ENCODE measurements at regions of chr10 and their contacts with region 1.

Region 1: DNA sequence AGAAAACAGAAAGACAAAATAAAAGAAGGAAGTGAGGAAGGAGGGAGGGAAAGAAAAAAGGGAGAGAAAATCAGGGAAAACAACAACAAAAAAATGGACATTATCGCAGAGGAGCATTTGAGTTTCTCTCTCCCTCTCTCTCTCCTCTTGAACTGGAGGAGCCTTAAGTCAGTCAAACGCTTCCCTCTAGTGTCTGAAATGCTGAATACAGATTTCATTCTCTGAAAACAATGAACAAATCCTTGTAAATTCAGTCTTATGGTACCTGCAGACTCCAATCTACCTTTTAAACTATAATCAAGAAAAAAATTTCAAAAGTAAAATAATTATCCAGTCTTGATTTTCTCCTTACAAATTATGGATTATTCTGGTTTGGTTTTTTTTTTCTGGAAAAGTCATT is 89.2 kb upstream of the PFKP start:
- DNase-seq: no peak
- ATAC-seq: no peak
- H3K4me3 Mint-ChIP-seq: no peak overlapping the region
- H3K27ac Mint-ChIP-seq: peak overlapping the region; percentile 9
- H3K4me1 Mint-ChIP-seq: peaks cover 37% of the 10 kb centered on the region
- H3K27me3 Mint-ChIP-seq: no peaks in the 10 kb centered on the region
- CTCF ChIP-seq: no peak

Region 2: GRCh38 chr10:1109795-1110673 is 1868.1 kb before region 1 on chr10:
- CTCF ChIA-PET with region 1: no interaction called
- POLR2A ChIA-PET with region 1: no interaction called
- intact Hi-C with region 1: loop called (anchors 2 kb)
- DNase-seq: no peak
- ATAC-seq: peak; percentile 97
- H3K4me3 Mint-ChIP-seq: no peak overlapping the region
- H3K27ac Mint-ChIP-seq: peak overlapping the region; percentile 77
- H3K4me1 Mint-ChIP-seq: peaks cover 10% of the 10 kb centered on the region
- H3K27me3 Mint-ChIP-seq: no peaks in the 10 kb centered on the region
- CTCF ChIP-seq: no peak

Region 3: DNA sequence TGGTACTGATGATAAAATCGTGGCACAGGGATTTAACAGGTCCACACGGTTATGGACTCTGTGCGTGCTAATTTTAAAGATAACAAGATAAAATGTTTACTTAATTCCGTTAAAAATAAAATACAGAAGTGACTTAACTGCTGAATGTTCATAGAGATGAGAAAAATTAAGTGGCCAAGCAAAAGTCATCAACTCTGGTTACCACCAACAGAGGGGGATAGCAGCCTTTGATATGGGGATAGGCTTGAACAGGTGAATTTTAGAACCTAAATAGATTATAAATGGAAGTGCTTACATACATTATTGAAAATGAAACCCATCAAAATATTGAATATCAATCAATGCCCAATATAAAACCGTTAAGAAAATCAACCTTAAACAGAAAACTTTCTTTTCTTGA is 1677.0 kb before region 1 on chr10:
- CTCF ChIA-PET with region 1: no interaction called
- POLR2A ChIA-PET with region 1: no interaction called
- intact Hi-C with region 1: loop called (anchors 10 kb)
- DNase-seq: no peak
- ATAC-seq: no peak
- H3K4me3 Mint-ChIP-seq: no peak overlapping the region
- H3K27ac Mint-ChIP-seq: no peak overlapping the region
- H3K4me1 Mint-ChIP-seq: no peaks in the 10 kb centered on the region
- H3K27me3 Mint-ChIP-seq: peaks cover 12% of the 10 kb centered on the region
- CTCF ChIP-seq: no peak

Region 4: GRCh38 chr10:2839081-2839725 is 138.9 kb before region 1 on chr10:
- CTCF ChIA-PET with region 1: interaction called, 3 read pairs
- POLR2A ChIA-PET with region 1: no interaction called
- intact Hi-C with region 1: loop called (anchors 1 kb)
- DNase-seq: no peak
- ATAC-seq: no peak
- H3K4me3 Mint-ChIP-seq: no peak overlapping the region
- H3K27ac Mint-ChIP-seq: no peak overlapping the region
- H3K4me1 Mint-ChIP-seq: no peaks in the 10 kb centered on the region
- H3K27me3 Mint-ChIP-seq: peaks cover 12% of the 10 kb centered on the region
- CTCF ChIP-seq: no peak

Region 5: DNA sequence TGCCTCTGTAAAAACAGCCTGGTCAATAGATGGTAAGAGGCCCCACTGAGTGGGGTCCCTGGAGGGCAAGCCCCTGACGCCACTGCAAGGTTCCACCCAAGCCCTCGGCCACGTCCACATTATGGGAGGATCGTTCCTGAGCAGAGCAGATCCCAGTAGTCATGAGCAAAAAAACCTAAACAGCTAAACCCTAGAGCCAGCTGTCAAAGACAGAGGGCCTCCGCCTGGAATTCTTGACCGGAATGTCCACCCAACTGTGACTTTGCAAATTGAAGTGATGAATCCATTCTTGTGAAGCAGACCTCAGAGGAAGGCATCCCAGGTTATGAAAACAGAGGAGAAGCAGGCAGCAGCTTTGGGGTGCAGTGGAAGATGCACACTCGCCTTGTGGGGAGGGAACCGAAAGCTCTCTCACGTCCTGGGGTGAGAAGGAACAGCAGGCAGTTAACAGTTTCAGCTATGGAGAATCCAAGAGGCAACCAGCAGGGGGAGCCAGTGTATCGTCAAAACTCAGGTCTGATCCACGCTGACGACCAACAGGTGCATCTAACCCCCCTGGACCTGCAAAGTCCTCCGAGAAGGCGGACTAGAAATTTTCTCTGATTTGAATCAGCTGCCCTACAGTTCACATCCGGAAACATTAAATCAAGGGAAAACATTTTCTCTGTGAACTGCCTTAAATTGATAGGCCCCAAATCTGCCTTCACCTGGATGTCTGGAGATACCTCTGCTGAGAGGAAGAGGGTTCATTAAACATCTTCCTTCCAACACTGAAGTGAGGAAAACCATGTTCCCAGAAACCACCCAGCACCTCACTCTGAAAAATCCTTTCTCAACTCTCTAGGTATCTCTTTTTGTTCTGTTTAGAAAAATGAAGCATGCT is 49.9 kb before region 1 on chr10:
- CTCF ChIA-PET with region 1: interaction called, 3 read pairs
- POLR2A ChIA-PET with region 1: interaction called, 5 read pairs
- intact Hi-C with region 1: loop called (anchors 1 kb)
- DNase-seq: peak; percentile 32
- ATAC-seq: peak; percentile 66
- H3K4me3 Mint-ChIP-seq: no peak overlapping the region
- H3K27ac Mint-ChIP-seq: no peak overlapping the region
- H3K4me1 Mint-ChIP-seq: peaks cover 4% of the 10 kb centered on the region
- H3K27me3 Mint-ChIP-seq: peaks cover 13% of the 10 kb centered on the region
- CTCF ChIP-seq: no peak

Region 6: DNA sequence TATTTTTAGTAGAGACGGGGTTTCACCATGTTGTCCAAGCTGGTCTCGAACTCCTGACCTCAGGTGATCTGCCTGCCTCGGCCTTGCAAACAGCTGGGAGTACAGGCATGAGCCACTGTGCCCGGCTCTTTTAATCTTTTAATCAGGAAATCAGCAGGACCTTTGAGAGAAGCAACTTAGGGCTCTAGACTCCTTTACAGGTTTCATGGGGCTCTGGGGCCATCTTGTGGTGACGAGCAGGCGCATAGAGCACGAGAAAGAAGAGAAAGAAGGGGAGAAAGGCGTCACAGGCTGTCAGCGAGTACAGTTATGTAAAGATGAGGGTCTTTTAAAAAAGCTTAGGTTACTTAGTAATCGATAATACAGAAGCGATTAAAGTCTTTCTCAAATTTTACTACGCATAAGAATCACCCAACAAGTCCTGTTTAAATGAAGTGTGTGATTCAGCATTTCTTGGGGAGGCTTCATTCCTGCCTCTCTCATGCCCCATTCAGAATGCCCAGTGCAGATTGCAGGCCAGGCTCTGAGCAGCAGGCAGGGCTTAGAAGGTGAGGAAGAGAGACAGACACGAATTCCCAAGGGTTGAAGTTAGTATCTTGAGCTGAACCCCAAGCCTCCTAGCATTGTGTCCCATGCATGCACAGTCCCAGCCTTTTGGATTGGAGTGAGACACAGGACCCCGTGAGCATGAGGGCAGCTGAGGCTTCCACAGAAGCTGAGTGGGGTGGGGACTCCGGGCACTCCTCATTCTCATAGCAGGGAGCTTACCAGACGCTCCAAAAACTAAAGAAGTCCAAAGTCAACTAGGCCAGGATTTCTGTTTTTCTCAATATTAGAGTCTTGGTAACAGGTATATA is 65.6 kb after region 1 on chr10:
- CTCF ChIA-PET with region 1: interaction called, 7 read pairs
- POLR2A ChIA-PET with region 1: no interaction called
- intact Hi-C with region 1: loop called (anchors 1 kb)
- DNase-seq: peak; percentile 34
- ATAC-seq: peak; percentile 76
- H3K4me3 Mint-ChIP-seq: no peak overlapping the region
- H3K27ac Mint-ChIP-seq: no peak overlapping the region
- H3K4me1 Mint-ChIP-seq: peaks cover 3% of the 10 kb centered on the region
- H3K27me3 Mint-ChIP-seq: peaks cover 17% of the 10 kb centered on the region
- CTCF ChIP-seq: no peak